ENCODE measurements at regions of chr4 and their contacts with region 1.

Region 1: DNA sequence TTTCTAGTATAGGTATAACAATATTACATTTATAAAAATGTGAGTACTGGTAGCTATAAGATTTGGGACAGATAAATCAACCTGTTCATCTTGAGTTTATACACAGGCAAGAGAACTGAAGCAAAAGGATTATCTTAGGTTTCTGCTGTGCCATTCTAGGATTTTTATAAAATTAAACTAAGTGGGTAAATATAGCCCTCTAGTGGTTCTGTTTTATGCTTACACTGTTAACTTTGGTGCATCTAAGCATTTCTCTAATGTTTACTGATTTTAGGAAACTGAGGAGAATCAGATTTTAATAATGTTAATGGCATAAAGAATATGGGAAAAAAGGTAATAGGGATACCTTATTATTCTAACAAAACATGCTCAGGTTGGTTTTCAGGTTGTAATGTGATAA is 1.1 kb upstream of the RRH start:
- DNase-seq: no peak
- ATAC-seq: peak; percentile 57
- H3K4me3 Mint-ChIP-seq: no peak overlapping the region
- H3K27ac Mint-ChIP-seq: no peak overlapping the region
- H3K4me1 Mint-ChIP-seq: peaks cover 4% of the 10 kb centered on the region
- H3K27me3 Mint-ChIP-seq: no peaks in the 10 kb centered on the region

Region 2: DNA sequence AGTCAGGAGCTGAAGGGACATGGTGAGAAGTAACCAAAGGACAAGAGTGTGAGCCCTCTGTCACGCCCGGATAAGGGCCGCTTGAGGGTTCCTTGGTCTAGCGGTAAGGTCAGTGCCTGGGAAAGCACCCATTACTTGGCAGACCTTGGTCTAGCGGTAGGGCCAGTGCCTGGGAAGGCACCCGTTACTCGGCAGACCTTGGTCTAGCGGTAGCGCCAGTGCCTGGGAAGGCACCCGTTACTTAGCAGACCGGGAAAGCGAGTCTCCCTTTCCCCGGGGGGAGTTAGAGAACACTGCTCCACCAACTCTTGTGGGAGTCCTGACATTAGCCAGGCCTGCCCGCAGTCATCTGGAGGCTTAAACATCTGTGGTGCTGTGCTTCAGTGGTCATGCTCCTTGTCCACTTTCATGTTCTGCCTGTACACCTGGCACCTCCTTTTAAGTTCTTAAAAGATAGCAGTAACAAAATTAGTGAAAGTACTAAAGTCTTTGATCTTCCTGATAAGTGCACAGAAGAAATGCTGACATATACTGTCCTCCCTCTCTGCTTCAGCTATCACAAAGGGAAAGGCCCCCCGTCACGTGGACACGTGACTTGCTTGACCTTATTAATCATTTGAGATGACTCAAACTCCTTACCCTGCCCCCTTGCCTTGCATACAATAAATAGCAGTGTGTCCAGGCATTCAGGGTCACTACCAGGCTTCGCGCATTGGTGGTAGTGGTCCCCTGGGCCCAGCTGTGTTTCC is 402.5 kb before region 1 on chr4:
- CTCF ChIA-PET with region 1: interaction called, 11 read pairs
- DNase-seq: no peak
- ATAC-seq: no peak
- H3K4me3 Mint-ChIP-seq: no peak overlapping the region
- H3K27ac Mint-ChIP-seq: no peak overlapping the region
- H3K4me1 Mint-ChIP-seq: peaks cover 10% of the 10 kb centered on the region
- H3K27me3 Mint-ChIP-seq: no peaks in the 10 kb centered on the region

Region 3: GRCh38 chr4:109631532-109632108 is 195.1 kb before region 1 on chr4:
- CTCF ChIA-PET with region 1: no interaction called
- DNase-seq: no peak
- ATAC-seq: no peak
- H3K4me3 Mint-ChIP-seq: no peak overlapping the region
- H3K27ac Mint-ChIP-seq: no peak overlapping the region
- H3K4me1 Mint-ChIP-seq: peaks cover 10% of the 10 kb centered on the region
- H3K27me3 Mint-ChIP-seq: no peaks in the 10 kb centered on the region

Region 4: GRCh38 chr4:109815151-109816081 is 11.3 kb before region 1 on chr4 and contains the start of gene GAR1:
- CTCF ChIA-PET with region 1: interaction called, 17 read pairs
- DNase-seq: peak; percentile 96
- ATAC-seq: peak; percentile 94
- H3K4me3 Mint-ChIP-seq: peak within 1 kb of the TSS; percentile 95
- H3K27ac Mint-ChIP-seq: peak within 1 kb of the TSS; percentile 98
- H3K4me1 Mint-ChIP-seq: peaks cover 58% of the 10 kb centered on the region
- H3K27me3 Mint-ChIP-seq: no peaks in the 10 kb centered on the region
- total RNA-seq, gene GAR1: 25.2 to 29.9 TPM